SK-N-SH (cell line): ENCODE measurements at regions of chr15 and their contacts with region 1.

Region 1: DNA sequence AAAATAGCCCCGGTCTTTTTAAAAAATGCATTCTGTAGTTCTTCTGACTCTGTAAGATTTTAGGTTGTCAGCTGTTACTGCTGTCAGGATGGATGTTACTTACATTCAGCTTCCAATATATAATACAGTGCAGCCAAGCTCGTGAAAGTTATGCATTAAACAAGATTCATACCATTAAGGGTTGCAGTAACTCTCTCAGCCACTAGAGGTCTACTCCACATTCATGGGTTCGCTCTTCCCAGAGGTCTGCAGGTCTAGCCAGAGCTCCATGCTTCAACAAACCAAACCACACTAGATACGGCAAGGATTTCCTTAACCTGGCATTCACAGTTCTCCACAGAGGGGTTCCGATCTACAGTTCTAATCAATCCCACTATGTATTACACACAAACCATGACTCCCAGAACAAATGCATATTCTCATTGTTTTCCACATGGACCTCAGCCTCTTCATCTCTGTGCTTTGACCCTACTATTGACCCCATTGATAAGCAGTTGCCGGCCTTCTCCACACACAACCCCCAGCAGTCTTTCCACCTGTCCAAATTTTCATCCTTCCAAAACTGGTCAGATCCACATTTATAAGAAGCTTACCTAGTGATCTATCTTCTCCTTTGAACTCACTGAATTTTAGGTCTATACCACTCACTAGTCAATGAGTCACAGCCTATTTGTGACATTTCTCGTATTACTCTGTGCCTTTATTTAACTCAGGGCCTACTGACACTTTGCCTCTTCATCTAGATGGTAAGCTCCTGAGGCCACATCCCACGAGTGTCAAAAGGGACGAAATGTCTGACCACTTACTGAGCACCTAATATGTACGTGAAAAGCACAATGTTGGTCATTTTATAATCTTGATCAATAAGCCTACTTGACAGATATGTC is 33.7 kb downstream of the RORA start:
- DNase-seq: peak; percentile 39
- H3K4me3 ChIP-seq: no peak overlapping the region
- H3K27ac ChIP-seq: no peak overlapping the region
- H3K4me1 ChIP-seq: peaks cover 0 to 12% of the 10 kb centered on the region in 2 experiments; a peak in 1 of 4 replicates
- H3K27me3 ChIP-seq: no peaks in the 10 kb centered on the region
- CTCF ChIP-seq: peak; percentile 72
- EP300 ChIP-seq: no peak
- RAD21 ChIP-seq: peak; percentile 68

Region 2: DNA sequence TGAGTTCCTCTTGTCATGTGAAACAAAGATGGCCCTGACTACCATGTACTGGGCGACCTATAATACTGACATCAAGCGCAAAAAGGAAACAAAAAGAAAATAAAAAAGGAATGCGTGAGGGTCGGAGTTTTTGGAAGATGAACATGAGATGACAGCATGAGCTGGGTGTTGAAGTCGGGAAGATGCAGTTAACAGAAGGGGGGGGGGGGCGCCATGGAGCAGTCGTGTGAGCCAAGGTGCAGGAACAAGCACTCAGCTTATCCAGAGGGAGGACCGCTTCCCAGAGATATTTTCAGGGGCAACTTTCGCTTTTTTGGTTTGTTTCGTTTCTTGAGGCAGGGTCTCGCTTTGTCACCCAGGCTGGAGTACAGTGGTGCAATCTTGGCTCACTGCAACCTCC is 76.5 kb before region 1 on chr15:
- CTCF ChIA-PET with region 1: interaction called, 10 read pairs
- POLR2A ChIA-PET with region 1: no interaction called
- DNase-seq: peak; percentile 37
- H3K4me3 ChIP-seq: no peak overlapping the region
- H3K27ac ChIP-seq: no peak overlapping the region
- H3K4me1 ChIP-seq: peaks cover 0 to 16% of the 10 kb centered on the region in 2 experiments; a peak in 2 of 4 replicates
- H3K27me3 ChIP-seq: no peaks in the 10 kb centered on the region
- CTCF ChIP-seq: peak; percentile 30; the same call in 1 of the 2 replicates
- EP300 ChIP-seq: no peak
- RAD21 ChIP-seq: peak; percentile 15; the same call in 1 of the 2 replicates

Region 3: GRCh38 chr15:61184431-61184830 is 10.9 kb before region 1 on chr15:
- CTCF ChIA-PET with region 1: interaction called, 20 read pairs
- POLR2A ChIA-PET with region 1: no interaction called
- DNase-seq: no peak
- H3K4me3 ChIP-seq: no peak overlapping the region
- H3K27ac ChIP-seq: no peak overlapping the region
- H3K4me1 ChIP-seq: peaks cover 0 to 20% of the 10 kb centered on the region in 2 experiments; a peak in 2 of 4 replicates
- H3K27me3 ChIP-seq: no peaks in the 10 kb centered on the region
- CTCF ChIP-seq: no peak
- EP300 ChIP-seq: no peak
- RAD21 ChIP-seq: no peak

Region 4: DNA sequence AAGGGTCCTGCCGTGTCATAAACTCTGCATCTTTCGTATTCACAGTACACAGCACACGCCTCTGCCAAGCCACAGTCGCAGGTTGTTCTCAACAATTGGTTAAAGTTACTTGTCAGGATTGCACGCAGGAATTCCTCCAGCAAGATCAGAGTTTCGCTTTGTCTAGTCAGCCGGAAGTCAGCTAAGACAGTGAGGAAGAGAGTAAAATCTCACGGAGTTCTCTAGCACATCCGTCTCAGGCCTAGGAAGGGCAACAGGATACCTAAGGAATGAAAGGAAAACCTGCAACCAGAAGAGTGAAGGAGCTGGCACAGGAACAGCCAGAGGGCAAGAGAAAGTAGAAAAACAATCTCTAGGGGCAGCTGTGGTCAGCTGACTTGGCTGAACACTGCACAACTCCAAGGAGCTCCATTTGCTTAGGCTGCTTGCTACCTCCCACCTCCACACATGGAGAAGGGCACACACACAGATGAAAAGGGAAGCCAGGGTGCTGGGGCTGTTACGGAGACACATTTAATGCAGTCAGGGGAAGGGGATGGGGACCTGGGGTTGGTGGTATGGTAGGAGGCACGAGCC is 10.1 kb after region 1 on chr15:
- CTCF ChIA-PET with region 1: interaction called, 28 read pairs
- POLR2A ChIA-PET with region 1: no interaction called
- DNase-seq: no peak
- H3K4me3 ChIP-seq: no peak overlapping the region
- H3K27ac ChIP-seq: no peak overlapping the region
- H3K4me1 ChIP-seq: peaks cover 0 to 21% of the 10 kb centered on the region in 2 experiments; a peak in 2 of 4 replicates
- H3K27me3 ChIP-seq: no peaks in the 10 kb centered on the region
- CTCF ChIP-seq: no peak
- EP300 ChIP-seq: no peak
- RAD21 ChIP-seq: no peak

Region 5: GRCh38 chr15:61227269-61227949 is 32.0 kb after region 1 on chr15:
- CTCF ChIA-PET with region 1: interaction called, 11 read pairs
- POLR2A ChIA-PET with region 1: interaction called, 3 read pairs
- DNase-seq: peak; percentile 76
- H3K4me3 ChIP-seq: peak overlapping the region; percentile 75 to 90
- H3K27ac ChIP-seq: peak overlapping the region in 1 of 2 experiments; percentile 29; a peak in 1 of 4 replicates
- H3K4me1 ChIP-seq: peaks cover 3 to 5% of the 10 kb centered on the region in 2 experiments; a peak in 2 of 4 replicates
- H3K27me3 ChIP-seq: no peaks in the 10 kb centered on the region
- CTCF ChIP-seq: no peak
- EP300 ChIP-seq: peak in 1 of 2 experiments; percentile 29; a peak in 1 of 4 replicates
- RAD21 ChIP-seq: no peak

Region 6: DNA sequence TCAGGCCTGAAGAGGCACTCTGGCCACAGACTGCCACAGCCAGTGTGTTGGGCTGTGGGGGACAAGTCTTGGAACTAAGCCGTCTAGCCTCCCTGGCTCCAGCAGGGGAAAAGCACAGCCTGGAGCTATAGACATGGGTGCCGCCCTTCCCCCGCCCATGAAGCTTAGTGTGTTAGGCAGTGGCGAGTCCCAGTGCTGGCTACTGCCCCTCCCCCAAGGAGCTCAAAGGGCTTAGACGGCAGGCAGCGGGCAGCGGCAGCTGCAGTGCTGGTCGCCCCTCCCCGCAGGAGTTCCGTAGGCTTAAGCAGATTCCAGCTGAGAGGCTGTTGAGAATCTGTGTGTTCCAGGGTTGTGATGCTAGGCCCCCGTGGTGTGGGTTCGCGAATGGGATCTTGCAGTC is 169.5 kb after region 1 on chr15:
- CTCF ChIA-PET with region 1: no interaction called
- POLR2A ChIA-PET with region 1: no interaction called
- DNase-seq: no peak
- H3K4me3 ChIP-seq: no peak overlapping the region
- H3K27ac ChIP-seq: no peak overlapping the region
- H3K4me1 ChIP-seq: no peaks in the 10 kb centered on the region; a peak in 1 of 4 replicates
- H3K27me3 ChIP-seq: no peaks in the 10 kb centered on the region
- CTCF ChIP-seq: no peak
- EP300 ChIP-seq: no peak
- RAD21 ChIP-seq: no peak